ENCODE measurements at regions of chr19 and their contacts with region 1.

Region 1: DNA sequence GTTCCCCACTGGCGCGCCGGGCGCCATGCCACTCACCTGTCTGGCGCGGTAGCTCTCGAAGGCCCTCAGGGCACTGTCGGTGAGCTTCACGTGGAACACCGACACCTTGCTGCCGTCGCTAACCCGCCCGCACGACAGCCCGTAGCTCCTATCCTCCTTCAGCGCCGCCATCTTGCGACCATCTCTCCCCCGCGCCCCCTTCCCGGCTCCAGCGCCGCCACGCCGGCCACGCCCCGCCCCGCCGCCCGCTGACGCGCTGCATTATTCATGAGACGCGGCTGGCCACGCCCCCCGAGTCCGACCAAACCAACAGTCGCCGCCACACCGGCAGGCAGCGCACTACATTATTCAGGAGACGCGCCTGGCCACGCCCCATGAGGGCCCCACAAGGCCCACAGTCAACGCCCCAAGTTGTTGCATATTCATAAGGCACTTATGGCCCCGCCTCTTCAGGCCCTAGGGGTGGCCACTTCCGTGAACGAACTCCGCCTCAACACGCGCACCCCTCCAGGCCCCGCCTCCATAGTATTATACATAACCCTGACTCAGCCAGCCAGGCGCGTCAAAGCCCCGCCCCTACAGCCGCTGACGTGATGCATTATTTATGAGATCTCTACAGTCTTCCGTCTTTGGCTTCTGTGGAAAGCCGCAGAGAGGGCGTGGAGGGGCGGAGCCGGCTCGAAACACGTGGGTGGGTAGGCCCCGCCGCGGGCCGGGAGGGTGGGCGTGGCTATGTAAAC is at the start of gene ELL:
- DNase-seq: peak; percentile 100
- H3K4me3 Mint-ChIP-seq: peak within 1 kb of the TSS; percentile 95
- H3K27ac Mint-ChIP-seq: peak within 1 kb of the TSS; percentile 88
- H3K4me1 Mint-ChIP-seq: peaks cover 9% of the 10 kb centered on the region
- H3K27me3 Mint-ChIP-seq: no peaks in the 10 kb centered on the region
- total RNA-seq, gene ELL: 27.0 and 27.5 TPM in 2 replicates

Region 2: DNA sequence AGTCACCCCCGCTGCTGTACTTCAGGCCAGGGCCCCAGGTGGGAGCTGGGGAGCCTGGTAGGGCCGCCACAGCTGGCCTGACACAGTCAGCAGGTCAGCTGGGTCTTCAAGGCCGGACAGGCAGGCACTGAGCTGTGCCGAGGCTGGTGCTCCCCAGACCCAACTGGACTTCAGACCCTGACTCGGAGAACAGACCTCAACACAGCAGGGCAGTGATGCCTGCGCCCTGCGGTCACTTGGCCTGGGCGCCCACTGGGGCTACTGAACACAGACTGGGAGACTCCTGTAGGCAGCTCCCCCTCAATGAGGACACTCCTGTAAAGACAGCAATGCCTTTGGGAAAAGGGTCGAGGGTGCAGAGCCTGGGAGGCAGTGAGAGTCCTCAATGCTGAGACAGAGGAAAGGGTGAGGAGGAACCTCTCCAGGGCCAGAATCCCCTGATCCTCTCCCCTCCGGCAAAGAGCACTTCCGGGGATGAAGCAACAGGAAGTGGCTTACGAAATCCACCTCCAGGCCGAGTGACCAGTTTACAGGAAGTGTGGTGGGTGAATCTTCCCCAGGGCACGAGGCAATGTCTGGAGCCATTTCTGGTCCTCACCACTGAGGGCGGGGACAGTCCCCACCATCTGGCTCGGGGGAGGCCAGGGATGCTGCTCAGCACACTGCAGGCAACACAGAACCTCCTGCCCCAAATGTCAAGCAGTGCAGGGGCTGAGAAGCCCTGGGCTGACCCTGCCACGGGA is 43.3 kb before region 1 on chr19:
- intact Hi-C with region 1: loop called (anchors 2 kb)
- DNase-seq: peak; percentile 46
- H3K4me3 Mint-ChIP-seq: peak overlapping the region; percentile 69
- H3K27ac Mint-ChIP-seq: peak overlapping the region; percentile 94
- H3K4me1 Mint-ChIP-seq: peaks cover 74% of the 10 kb centered on the region
- H3K27me3 Mint-ChIP-seq: no peaks in the 10 kb centered on the region

Region 3: DNA sequence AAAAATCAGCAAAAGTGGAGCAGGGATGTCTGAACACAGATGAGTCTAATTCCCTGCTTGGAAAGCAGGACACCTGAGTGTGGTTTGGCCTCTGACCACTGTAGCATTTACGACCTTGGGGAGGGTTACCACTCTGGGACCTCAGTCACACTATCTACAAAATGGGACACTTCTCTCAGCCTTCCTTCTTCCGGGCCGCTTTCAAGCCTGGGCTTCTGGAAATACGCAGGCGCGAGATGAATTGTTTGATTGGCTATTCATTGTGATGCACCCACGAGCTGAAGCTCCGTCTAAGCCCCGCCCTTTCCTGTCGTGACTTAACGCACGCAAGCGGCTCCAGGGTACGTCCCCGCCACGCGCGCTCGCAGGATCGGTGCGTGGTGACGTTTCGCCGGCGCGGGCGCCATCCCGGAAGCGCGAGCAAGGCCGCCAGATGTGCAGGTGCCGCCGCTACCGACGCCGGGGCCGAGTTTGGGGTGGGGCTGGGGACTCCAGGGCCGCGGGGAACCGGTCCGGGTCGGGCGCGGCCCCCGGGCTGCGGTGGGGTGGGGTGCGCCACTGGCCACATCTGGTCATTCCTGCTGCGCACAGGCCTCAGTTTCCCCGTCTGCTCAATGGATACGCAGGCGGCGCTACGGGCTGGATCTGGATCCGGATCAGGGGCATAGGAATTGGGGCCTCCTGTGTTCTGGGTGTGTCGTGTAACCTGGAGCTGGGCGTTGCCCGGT is 35.6 kb after region 1 on chr19 and contains the start of gene KXD1:
- intact Hi-C with region 1: loop called (anchors 1 kb)
- DNase-seq: peak; percentile 99
- H3K4me3 Mint-ChIP-seq: peak within 1 kb of the TSS; percentile 93
- H3K27ac Mint-ChIP-seq: peak within 1 kb of the TSS; percentile 96
- H3K4me1 Mint-ChIP-seq: peaks cover 16% of the 10 kb centered on the region
- H3K27me3 Mint-ChIP-seq: no peaks in the 10 kb centered on the region
- total RNA-seq, gene KXD1: 132 and 141 TPM in 2 replicates

Region 4: GRCh38 chr19:18588611-18589379 is 66.7 kb after region 1 on chr19 and contains the start of gene REX1BD:
- intact Hi-C with region 1: loop called (anchors 1 kb)
- DNase-seq: peak; percentile 86
- H3K4me3 Mint-ChIP-seq: peak within 1 kb of the TSS; percentile 84
- H3K27ac Mint-ChIP-seq: peak within 1 kb of the TSS; percentile 93
- H3K4me1 Mint-ChIP-seq: peaks cover 31% of the 10 kb centered on the region
- H3K27me3 Mint-ChIP-seq: no peaks in the 10 kb centered on the region
- total RNA-seq, gene REX1BD: 122 and 132 TPM in 2 replicates

Region 5: GRCh38 chr19:18919086-18919899 is 397.2 kb after region 1 on chr19 and contains the starts of genes COPE and DDX49:
- intact Hi-C with region 1: loop called (anchors 1 kb)
- DNase-seq: peak; percentile 98
- H3K4me3 Mint-ChIP-seq: peak within 1 kb of the TSS; percentile 96
- H3K27ac Mint-ChIP-seq: peak within 1 kb of the TSS; percentile 94
- H3K4me1 Mint-ChIP-seq: peaks cover 19% of the 10 kb centered on the region
- H3K27me3 Mint-ChIP-seq: no peaks in the 10 kb centered on the region
- total RNA-seq, gene COPE: 231 and 240 TPM in 2 replicates
- total RNA-seq, gene DDX49: 75.2 and 77.5 TPM in 2 replicates